ENCODE measurements at regions of chr5 and their contacts with region 1.

Region 1: DNA sequence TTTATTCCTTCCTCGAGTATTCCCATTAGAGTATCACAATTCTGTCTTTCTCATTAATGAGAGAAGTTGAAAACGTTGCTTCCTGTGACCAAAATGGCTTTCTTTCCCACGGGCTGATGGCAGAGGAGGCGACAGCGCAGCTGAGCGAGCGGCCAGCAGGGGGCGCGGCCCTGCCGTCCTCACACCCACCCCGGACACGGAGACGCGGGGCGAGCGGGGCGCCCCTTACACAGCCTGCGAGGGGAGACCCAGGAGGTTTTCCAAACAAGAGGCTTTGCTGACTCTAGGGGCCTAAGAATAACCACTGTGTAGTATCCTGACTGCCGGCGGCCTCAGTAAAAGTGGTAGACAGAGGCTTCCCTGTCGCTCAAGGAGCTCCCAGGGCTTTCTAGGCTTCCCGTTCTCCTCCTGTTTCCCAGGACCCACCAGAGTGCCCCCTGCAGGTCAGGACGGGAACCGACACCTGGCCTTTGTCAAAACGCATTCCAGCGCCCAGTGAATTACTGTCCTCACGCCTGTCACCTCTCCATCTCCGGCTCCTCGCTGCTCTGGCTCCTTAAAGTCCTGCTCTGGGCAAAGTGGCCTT is 27.3 kb upstream of the FGF1 start:
- DNase-seq: peak; percentile 72
- H3K27ac ChIP-seq: peak overlapping the region; percentile 54
- CTCF ChIP-seq: peak; percentile 100

Region 2: GRCh38 chr5:142605611-142606010 is 107.6 kb before region 1 on chr5:
- CTCF ChIA-PET with region 1: interaction called, 14 read pairs
- POLR2A ChIA-PET with region 1: no interaction called
- DNase-seq: no peak
- H3K27ac ChIP-seq: no peak overlapping the region
- CTCF ChIP-seq: no peak

Region 3: GRCh38 chr5:142637871-142638270 is 75.3 kb before region 1 on chr5:
- CTCF ChIA-PET with region 1: no interaction called
- POLR2A ChIA-PET with region 1: no interaction called
- DNase-seq: no peak
- H3K27ac ChIP-seq: no peak overlapping the region
- CTCF ChIP-seq: no peak

Region 4: GRCh38 chr5:142669477-142669876 is 43.7 kb before region 1 on chr5:
- CTCF ChIA-PET with region 1: interaction called, 11 read pairs
- POLR2A ChIA-PET with region 1: no interaction called
- DNase-seq: no peak
- H3K27ac ChIP-seq: no peak overlapping the region
- CTCF ChIP-seq: no peak

Region 5: DNA sequence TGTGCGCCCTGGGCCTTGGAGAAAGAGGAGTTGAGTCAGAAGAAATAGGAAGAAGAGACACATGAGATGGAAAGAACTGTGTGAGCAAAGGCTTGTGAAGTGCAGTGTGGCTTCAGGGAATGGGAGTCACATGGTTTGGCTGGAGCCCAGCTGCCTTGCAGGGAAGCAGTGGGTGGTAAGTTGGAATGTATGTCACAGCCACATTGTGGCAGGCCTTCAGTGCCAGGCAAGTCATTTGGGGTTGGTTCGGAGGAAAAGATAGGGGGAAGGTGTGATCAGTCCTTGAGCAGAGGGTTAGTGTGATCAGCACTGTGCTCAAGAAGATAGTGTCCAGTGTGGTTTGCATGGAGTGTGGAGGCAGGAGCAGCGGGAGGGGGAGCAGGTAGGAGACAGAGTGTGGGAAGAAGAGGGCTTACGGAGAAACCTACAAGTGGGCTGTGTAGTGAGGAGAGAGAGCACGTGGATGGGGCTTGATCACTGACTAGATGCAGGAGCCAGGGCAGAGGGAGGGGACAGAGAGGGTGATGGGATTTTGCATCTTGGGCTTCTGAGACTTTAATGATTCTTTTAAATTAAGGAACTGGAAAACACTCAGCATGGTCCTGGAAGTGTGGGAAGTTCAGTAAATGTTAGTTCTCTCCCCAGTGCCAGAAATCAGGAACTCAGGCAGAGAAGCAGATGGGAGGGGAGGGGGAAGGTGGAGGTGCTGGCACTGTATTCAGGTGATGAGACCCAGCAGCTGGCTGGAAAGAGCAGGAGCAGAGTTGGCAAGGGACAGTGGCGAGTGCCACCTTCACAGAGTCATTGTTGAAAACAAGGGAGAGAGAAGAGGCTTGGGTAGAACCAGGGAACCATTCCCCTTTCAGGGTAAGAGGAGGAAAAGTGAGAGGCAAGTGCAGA is 103.6 kb after region 1 on chr5:
- CTCF ChIA-PET with region 1: no interaction called
- POLR2A ChIA-PET with region 1: no interaction called
- DNase-seq: no peak
- H3K27ac ChIP-seq: peak overlapping the region; percentile 49
- CTCF ChIP-seq: no peak

Region 6: DNA sequence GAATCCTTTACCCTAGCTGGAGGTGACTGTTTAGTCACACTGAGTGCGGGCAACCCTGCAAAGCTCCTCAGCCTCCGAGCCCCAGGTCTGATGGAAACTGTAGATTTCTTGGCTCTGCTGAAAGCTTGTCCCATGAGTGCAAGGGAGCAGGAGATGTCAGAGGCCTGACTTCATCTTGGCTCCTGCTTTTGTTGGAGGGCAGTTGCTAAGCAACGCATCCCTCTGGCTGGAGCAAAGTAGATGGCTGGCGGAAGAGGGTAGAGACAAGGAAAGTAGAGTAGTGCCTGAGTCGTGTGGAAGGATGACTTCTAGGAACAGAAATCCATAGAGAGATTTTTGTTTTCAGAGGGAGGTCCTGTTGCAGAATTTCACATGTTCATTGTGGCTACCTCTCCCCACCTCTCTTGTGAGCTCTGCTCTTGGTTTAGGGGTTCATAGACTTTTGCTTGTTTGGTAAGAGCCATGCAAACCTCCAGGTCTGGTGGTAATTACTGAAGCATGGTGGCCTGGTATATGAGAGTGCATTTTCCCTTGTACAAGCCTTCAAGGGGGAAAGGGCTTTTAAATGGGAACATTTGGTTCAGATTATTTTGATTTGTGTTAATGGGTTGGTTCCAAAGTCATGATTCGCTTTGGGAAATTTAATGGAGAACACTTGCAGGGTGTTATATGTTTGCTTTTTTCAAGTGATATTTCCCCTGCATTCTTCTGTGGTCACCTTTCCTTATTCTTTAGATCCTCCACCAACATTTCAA is 128.5 kb after region 1 on chr5:
- CTCF ChIA-PET with region 1: no interaction called
- POLR2A ChIA-PET with region 1: no interaction called
- DNase-seq: no peak
- H3K27ac ChIP-seq: no peak overlapping the region
- CTCF ChIP-seq: no peak

Region 7: GRCh38 chr5:142874537-142874936 is 161.3 kb after region 1 on chr5:
- CTCF ChIA-PET with region 1: interaction called, 88 read pairs
- POLR2A ChIA-PET with region 1: no interaction called
- DNase-seq: peak; percentile 68
- H3K27ac ChIP-seq: peak overlapping the region; percentile 61
- CTCF ChIP-seq: no peak

Region 8: DNA sequence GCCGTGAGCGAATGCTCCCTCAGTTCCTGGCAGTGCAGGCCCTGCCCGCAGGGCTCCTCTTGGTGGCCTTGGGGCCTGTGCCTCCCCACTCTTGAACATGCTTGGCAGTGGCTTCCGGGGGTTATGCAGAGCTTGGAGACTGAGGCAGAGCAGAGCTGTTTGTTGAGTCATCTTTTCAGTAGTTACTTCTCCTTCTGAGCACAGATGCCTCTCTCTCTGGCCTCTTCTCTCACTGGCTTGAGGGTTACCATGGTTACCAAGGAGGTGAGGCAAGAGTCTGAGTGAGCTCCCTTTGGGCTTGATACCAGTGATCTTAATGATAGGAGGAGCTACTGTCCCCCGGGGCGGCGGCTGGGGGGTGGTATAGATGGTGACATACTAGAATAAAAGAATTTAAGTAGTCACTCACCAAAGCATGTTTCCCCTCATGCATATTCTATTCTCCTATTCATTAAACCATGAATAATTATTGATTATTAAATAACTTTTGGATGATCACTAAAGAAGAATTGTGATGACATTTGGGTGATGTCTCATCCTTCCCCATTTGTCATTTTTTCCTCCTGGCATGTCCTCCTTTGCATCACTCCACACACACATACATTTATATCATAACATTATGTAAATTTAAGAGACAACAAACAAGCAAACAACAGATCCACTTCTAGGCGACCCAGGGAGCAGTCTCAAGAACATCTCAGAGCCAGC is 168.0 kb after region 1 on chr5:
- CTCF ChIA-PET with region 1: interaction called, 88 read pairs
- POLR2A ChIA-PET with region 1: no interaction called
- DNase-seq: no peak
- H3K27ac ChIP-seq: no peak overlapping the region
- CTCF ChIP-seq: no peak

Region 9: GRCh38 chr5:142888469-142889085 is 175.4 kb after region 1 on chr5:
- CTCF ChIA-PET with region 1: interaction called, 88 read pairs
- POLR2A ChIA-PET with region 1: no interaction called
- DNase-seq: peak; percentile 79
- H3K27ac ChIP-seq: no peak overlapping the region
- CTCF ChIP-seq: peak; percentile 90

Region 10: DNA sequence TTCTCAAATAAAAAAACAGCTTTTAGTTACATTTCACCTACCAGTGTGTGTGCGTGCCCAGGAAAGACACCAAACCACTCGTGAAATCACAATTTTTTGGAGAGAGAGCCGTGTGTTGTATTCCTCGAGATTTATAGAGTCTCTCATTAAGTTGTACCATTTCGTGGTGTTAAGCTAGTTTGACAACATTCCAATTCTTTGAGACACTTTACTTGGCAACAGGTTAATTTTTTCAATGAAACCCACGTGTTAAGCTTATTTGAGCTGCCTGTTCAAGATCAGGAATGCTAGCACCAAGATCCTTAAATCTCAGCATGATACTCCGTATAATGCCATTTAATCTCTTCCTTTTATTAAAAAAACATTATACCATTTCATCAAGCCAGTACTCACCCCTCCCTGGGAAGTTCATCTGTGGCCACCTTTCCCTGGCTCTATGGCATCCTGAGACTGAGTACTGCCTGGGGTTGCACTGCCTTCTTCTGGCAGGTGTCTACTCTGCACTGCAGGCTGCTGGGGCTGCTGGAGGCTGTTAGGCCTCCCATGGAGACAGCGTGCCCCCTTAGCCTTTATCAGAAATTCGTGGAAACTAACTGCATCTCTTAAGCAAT is 200.6 kb after region 1 on chr5:
- CTCF ChIA-PET with region 1: interaction called, 12 read pairs
- POLR2A ChIA-PET with region 1: no interaction called
- DNase-seq: peak; percentile 60
- H3K27ac ChIP-seq: no peak overlapping the region
- CTCF ChIP-seq: no peak